ENCODE measurements at regions of chr4 and their contacts with region 1.

Region 1: GRCh38 chr4:113434247-113434587 is 327.3 kb downstream of the CAMK2D start:
- DNase-seq: no peak
- ATAC-seq: no peak
- H3K4me3 ChIP-seq: no peak overlapping the region
- H3K27ac ChIP-seq: peak overlapping the region in 1 of 2 donors; percentile 51
- H3K4me1 ChIP-seq: peaks cover 7 to 18% of the 10 kb centered on the region in 2 donors
- H3K27me3 ChIP-seq: no peaks in the 10 kb centered on the region

Region 2: DNA sequence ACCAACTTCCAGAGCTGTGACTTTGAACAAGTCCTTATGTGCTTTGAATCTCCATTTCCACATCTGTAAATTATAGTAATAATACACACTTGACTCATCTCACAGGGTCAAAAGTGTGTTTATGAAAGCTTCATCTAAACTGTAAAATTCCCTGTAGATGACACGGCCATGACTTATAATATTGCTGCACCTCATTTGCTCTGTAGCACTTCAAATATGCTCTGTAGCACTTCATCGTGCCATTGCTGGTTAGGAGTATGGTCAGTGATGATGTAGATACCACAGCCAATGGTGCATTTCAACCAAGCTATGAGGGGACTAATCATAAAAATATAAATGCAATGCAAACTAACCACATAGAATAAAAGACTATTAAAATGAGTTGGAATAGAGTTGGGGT is 66.2 kb before region 1 on chr4:
- intact Hi-C with region 1: no loop called
- DNase-seq: no peak
- ATAC-seq: no peak
- H3K4me3 ChIP-seq: no peak overlapping the region
- H3K27ac ChIP-seq: no peak overlapping the region
- H3K4me1 ChIP-seq: no peaks in the 10 kb centered on the region
- H3K27me3 ChIP-seq: no peaks in the 10 kb centered on the region

Region 3: GRCh38 chr4:113474017-113474416 is 39.8 kb after region 1 on chr4:
- intact Hi-C with region 1: loop called in 1 of 2 experiments (anchors 5 kb)
- DNase-seq: no peak
- ATAC-seq: no peak
- H3K4me3 ChIP-seq: no peak overlapping the region
- H3K27ac ChIP-seq: no peak overlapping the region
- H3K4me1 ChIP-seq: peaks cover 2 to 11% of the 10 kb centered on the region in 2 donors
- H3K27me3 ChIP-seq: no peaks in the 10 kb centered on the region